ENCODE measurements at regions of chr21 and their contacts with region 1.

Region 1: DNA sequence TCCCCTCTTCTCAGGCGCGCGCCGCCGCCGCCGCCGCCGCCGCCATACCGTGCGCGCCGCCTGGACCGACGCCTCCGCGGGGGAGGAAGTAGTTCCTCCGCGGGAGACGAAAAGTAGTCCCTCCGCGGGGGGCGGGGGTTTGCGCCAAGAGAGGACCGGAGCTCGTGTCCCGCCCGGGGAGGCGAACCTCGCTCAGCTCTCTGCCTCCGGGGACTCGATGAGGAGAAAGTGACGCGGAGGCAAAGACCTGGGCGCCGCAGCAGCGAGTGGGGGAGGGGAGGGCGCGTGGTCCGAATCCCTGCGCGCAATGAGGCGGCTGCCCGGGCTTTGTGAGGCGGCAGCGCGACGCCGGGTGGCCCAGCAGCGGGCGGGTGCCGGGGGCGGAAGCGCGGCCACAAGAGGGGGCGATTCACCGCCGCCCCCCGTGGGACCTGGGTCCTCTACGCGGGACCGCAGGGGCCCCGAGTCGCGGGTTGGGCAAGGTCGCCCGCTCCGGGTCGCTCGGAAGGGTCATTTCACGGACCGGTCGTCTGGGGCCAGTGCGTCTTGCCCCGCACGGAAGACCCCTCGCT is at the start of gene BRWD1:
- DNase-seq: peak; percentile 32
- H3K4me3 ChIP-seq: peak within 1 kb of the TSS; percentile 67
- CTCF ChIP-seq: peak; percentile 12

Region 2: DNA sequence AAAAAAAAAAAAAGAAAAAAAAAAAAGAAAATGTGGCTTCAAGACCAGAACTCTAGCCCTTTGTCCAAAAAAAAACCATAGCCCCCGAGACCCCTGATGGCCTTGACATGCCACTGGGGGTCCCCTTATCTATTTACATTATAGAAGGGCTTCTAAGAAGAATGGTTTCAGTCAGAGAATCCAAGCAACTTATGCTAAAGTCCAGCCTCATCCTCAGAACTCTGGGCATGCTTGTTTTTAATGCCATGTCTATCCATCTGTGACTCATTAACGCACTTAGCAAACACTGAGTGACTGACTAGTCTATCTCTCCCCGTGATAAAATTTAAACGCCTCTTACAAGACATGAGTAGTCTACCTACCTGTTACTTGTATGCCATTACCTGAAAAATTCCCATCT is 844.7 kb before region 1 on chr21:
- in situ Hi-C with region 1: no loop called
- DNase-seq: no peak
- H3K4me3 ChIP-seq: no peak overlapping the region
- CTCF ChIP-seq: no peak

Region 3: DNA sequence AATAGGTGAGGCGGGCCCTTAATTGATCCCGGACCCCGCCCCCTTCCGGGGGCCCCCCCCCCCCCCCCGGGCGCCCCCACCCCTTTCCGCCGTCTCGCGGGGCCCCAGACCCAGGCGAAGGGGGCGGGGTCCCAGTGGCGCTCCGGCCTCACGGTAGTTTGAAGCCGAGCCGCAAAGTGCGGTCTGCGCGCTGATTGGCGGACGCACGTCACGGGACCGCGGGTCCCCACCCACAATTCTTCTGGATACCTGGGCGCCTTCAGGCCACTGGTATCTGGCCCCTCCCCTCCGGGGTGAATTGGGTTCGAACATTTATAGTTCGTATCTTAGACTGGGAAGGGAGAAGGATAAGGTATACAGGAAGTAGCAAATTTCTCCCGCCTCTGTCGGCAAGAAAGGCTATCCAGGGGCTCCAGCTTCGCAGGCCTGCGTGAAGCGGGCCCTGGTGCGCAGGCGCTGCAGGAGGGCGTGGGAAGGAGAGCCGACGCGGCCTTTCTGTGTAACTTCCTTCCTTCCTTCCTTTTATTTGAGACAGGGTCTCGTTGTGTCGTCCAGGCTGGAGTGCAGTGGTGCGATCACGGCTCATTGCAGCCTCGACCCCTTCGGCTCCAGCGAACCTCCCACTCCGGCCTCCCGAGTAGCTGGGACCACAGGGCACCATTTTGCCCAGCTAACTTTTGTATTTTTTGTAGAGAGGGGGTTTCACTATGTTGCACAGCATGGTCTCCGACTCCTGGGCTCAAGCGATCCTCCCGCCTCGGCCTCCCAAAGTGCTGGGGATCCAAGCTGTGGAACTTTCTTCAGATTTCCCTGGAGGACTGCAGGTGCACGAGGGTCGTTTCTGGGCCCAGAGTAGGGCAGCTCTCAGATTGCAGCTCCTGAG is 35.8 kb after region 1 on chr21:
- in situ Hi-C with region 1: loop called (anchors 5 kb)
- DNase-seq: peak; percentile 88
- H3K4me3 ChIP-seq: peak overlapping the region; percentile 54
- CTCF ChIP-seq: no peak

Measured in astrocyte of the cerebellum (primary cell).